ENCODE measurements at regions of chr14 and their contacts with region 1.

Region 1: GRCh38 chr14:58244556-58245387 is at the start of gene PSMA3:
- DNase-seq: peak; percentile 99
- H3K4me3 ChIP-seq: peak within 1 kb of the TSS; percentile 72 to 91 (median 86)
- H3K27ac ChIP-seq: peak within 1 kb of the TSS; percentile 90 to 98 (median 96)
- H3K4me1 ChIP-seq: peaks cover 26 to 43% (median 35%) of the 10 kb centered on the region in 4 donors
- H3K27me3 ChIP-seq: no peaks in the 10 kb centered on the region
- CTCF ChIP-seq: no peak
- EP300 ChIP-seq: no peak
- POLR2A ChIP-seq: peak; percentile 76
- total RNA-seq, gene PSMA3: 69.8 to 98.0 (median 84.8) TPM

Region 2: DNA sequence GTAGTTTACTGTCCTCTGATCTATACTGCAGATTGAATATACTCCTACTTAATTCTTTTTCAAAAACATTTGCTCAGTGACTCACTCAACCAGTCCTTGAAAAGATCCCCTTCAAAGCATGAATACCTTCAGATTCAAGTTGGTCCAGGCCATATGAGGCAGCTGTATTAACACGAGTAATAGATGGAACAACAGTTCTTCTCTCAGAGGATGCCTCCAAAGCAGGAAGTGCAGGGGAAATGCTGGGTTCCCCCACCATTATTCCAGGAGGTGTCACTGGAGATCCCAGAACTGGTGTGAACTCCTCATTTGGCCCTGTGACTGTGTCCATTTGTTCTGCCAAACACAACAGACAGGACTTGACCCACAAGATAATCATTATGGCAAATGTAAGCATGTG is 113.4 kb before region 1 on chr14:
- intact Hi-C with region 1: no loop called
- DNase-seq: no peak
- H3K4me3 ChIP-seq: no peak overlapping the region
- H3K27ac ChIP-seq: peak overlapping the region in 1 of 4 donors; percentile 7
- H3K4me1 ChIP-seq: peaks cover 0 to 18% (median 9%) of the 10 kb centered on the region in 4 donors
- H3K27me3 ChIP-seq: no peaks in the 10 kb centered on the region
- CTCF ChIP-seq: no peak
- EP300 ChIP-seq: no peak
- POLR2A ChIP-seq: no peak

Region 3: DNA sequence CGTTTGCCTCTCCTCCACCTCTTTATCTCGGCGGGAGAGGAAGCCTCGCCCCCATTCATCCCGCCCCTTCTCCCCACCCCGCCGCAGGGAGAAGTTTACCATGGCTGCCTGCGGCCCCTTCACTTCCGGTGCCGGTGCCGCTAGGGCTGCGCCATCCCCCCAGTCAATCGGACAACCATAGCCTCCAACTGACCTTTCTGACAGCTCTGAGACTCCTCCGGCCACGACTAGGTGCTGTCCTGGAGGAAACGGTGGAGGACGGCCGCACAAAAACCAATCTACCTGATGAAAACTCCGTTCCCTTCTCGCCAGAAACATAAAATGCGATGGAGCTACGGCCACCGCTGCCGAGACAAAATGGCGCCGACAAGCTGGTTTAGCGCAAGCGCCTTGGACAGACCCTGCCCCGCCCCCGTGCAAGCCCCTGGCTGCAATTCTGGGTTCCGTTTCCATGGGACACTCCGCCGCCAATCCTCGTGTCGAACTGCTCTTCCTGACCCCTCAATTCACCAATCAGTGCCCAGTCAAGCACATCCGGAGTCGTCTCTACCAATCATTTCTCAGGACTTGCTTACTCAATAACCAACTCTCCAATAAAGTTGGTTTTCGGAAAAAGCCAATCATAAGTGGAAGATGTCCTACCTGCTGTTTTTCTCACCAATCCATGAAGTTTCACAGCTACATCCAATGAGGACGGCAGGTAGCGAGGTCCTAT is 53.1 kb after region 1 on chr14:
- intact Hi-C with region 1: loop called (anchors 5 kb)
- DNase-seq: peak; percentile 99
- H3K4me3 ChIP-seq: peak overlapping the region; percentile 66 to 96 (median 92)
- H3K27ac ChIP-seq: peak overlapping the region; percentile 93 to 97 (median 94)
- H3K4me1 ChIP-seq: peaks cover 33 to 59% (median 55%) of the 10 kb centered on the region in 4 donors
- H3K27me3 ChIP-seq: no peaks in the 10 kb centered on the region
- CTCF ChIP-seq: peak in 1 of 3 experiments; percentile 2
- EP300 ChIP-seq: no peak
- POLR2A ChIP-seq: peak; percentile 64

Region 4: DNA sequence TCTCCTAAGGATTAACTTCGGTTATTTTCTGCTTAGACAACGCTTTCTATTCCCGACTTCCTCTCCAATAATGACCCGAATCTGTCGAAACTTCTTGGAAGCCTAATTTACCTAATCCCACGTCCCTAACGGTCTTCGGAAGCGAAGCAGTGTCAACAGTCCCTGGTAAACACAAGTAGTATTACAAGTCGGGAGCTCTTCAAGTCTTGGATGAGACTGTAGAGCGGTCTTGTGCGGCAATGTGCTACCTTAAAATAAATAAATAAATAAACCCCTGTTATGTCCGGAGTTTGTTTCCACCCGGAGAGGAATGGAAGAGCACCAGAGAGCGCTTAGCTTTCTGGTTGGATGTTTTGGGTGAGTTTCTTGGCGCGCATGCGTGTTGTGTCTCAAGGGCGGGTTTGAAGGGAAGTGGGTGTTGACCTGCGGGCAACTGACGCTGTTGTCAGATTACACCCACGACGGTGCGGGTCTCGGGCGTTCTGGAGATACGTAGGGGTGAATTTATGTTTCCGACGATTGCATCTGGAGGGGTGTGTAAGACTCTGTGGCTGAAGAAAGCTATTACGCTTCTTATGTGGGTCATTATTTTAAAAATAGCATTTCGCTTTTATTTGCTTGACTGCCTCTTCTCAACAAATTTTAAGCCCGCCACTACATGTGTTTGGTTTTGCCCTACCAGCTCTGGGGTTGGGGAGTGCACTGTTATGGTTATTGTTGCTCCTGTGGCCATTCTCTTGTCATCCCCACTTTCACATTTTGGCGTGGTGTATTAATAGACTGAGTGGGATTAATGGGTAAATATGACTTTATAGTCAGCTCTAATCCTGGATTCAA is 182.7 kb after region 1 on chr14 and contains the starts of genes KIAA0586 and TIMM9:
- intact Hi-C with region 1: loop called (anchors 10 kb)
- DNase-seq: peak; percentile 98
- H3K4me3 ChIP-seq: peak within 1 kb of the TSS; percentile 93 to 96 (median 94)
- H3K27ac ChIP-seq: peak within 1 kb of the TSS; percentile 90 to 94 (median 92)
- H3K4me1 ChIP-seq: peaks cover 27 to 50% (median 32%) of the 10 kb centered on the region in 4 donors
- H3K27me3 ChIP-seq: no peaks in the 10 kb centered on the region
- CTCF ChIP-seq: peak in 1 of 3 experiments; percentile 31
- EP300 ChIP-seq: no peak
- POLR2A ChIP-seq: peak; percentile 62
- total RNA-seq, gene KIAA0586: 10.8 to 17.1 (median 13.9) TPM
- total RNA-seq, gene TIMM9: 47.9 to 67.7 (median 52.8) TPM